ENCODE measurements at regions of chr19 and their contacts with region 1.

Region 1: DNA sequence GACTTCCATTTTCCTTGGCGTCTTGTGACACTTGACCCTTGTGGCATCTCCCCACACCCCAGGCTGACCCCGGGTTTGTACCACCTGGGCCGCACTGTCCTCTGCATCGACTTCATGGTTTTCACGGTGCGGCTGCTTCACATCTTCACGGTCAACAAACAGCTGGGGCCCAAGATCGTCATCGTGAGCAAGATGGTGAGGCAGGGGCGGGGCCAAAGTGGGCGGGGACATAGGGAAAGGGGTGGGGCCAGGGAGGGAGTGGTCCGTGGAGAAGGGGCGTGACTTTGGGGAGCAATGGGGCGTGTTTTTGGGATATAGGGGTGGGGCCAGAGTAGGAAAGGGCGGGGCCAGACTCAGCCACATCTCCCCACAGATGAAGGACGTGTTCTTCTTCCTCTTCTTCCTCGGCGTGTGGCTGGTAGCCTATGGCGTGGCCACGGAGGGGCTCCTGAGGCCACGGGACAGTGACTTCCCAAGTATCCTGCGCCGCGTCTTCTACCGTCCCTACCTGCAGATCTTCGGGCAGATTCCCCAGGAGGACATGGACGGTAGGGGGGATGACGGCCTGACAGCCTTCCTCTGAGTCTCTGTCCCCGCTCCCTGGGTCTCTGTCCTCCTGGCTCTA is 42.8 kb downstream of the TRPM4 start:
- H3K4me3 Mint-ChIP-seq: no peak overlapping the region
- H3K27ac Mint-ChIP-seq: peak overlapping the region; percentile 53
- H3K4me1 Mint-ChIP-seq: peaks cover 37% of the 10 kb centered on the region
- H3K27me3 Mint-ChIP-seq: peaks cover 8% of the 10 kb centered on the region

Region 2: GRCh38 chr19:48705431-48705830 is 494.9 kb before region 1 on chr19:
- intact Hi-C with region 1: no loop called
- H3K4me3 Mint-ChIP-seq: no peak overlapping the region
- H3K27ac Mint-ChIP-seq: no peak overlapping the region
- H3K4me1 Mint-ChIP-seq: no peaks in the 10 kb centered on the region
- H3K27me3 Mint-ChIP-seq: no peaks in the 10 kb centered on the region

Region 3: DNA sequence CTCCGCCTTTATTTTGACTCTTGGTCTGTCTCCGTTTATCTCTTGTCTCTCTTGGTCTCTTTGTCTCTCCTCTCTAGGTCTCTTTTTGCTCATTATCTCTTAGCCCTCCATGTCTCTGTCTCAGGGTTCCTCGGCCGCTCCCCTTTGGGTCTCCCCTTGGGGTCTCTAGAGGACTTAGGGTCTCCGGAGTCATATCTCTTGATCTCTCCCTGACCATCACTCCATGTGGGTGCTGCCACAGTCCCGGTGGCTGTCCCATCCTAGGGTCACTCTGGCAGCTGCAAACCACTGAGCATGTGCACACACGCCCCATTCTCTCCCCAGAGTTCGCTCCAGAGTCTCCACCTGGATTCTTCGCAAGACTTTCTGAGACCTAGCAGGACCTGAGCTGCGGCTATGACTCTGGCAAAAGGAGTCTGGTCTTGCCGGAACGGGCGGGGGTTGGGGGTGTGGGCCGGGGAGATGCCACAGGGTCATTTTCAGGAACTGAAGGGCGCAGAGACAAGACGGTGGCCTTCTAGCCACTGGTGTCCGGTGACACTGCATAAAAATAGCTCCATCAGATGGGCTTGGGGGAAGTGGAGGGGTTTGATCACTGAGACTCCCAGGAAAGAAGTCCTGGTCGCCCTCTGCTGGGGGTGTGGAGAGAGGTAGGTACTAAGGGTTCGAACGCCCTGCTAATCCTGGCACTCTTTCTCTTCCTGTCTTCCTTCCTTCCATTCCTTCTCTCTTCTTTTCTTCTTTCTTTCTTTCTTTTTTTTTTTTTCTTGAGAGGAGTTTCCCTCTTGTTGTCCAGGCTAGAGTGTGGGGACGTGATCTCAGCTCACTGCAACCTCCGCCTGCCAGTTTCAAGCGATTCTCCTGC is 126.6 kb before region 1 on chr19:
- intact Hi-C with region 1: loop called (anchors 5 kb)
- H3K4me3 Mint-ChIP-seq: no peak overlapping the region
- H3K27ac Mint-ChIP-seq: no peak overlapping the region
- H3K4me1 Mint-ChIP-seq: peaks cover 18% of the 10 kb centered on the region
- H3K27me3 Mint-ChIP-seq: peaks cover 65% of the 10 kb centered on the region

Region 4: DNA sequence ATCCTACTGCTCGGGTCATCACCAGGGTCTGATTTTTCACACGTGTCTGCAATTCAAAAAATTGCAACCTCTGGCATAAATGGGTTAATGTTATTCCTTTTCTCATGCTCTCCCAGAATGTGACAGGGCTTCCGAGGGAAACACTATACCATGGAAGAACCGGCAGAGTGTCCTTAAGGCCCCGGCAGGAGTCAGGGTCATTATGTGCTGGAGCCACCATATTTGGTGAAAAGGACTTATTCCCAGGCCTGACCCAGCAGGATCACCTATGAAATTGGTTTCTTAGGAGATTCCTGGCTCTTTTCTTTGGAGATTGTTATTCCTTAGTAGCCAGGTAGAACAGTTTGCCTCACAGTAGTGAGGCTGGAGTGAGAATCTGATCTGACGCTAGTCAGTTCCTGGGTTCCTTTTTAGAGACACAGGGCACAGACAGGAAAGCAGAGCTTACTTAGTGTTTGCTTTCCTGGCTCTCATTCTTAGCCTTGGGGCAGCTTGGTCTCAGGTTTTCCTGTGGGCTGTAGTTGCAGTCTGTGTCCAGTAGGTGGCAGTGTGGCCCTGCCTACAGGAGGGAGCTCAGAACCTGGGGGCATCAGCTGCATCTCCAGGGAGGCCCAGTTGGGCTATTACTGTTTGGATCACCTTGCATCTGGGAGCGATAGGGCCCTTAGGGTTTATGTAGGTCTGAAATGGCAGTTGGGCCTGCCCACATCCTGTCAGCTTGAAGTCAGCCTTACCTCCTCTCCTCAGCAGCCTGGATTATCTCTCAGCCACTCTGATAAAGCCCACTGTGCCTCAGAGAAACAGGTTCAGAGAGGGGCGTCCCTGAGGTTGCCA is 102.7 kb before region 1 on chr19:
- intact Hi-C with region 1: loop called (anchors 1 kb)
- H3K4me3 Mint-ChIP-seq: no peak overlapping the region
- H3K27ac Mint-ChIP-seq: no peak overlapping the region
- H3K4me1 Mint-ChIP-seq: no peaks in the 10 kb centered on the region
- H3K27me3 Mint-ChIP-seq: no peaks in the 10 kb centered on the region